PC-9 (cell line): ENCODE measurements at regions of chr16 and their contacts with region 1.

Region 1: GRCh38 chr16:31142109-31143010 is 6.8 kb upstream of the PRSS8 start:
- DNase-seq: peak; percentile 95 to 100
- H3K4me3 ChIP-seq: peak overlapping the region; percentile 52
- H3K27ac ChIP-seq: peak overlapping the region; percentile 69
- H3K4me1 ChIP-seq: peaks cover 39% of the 10 kb centered on the region
- H3K27me3 ChIP-seq: no peaks in the 10 kb centered on the region
- CTCF ChIP-seq: peak; percentile 93

Region 2: DNA sequence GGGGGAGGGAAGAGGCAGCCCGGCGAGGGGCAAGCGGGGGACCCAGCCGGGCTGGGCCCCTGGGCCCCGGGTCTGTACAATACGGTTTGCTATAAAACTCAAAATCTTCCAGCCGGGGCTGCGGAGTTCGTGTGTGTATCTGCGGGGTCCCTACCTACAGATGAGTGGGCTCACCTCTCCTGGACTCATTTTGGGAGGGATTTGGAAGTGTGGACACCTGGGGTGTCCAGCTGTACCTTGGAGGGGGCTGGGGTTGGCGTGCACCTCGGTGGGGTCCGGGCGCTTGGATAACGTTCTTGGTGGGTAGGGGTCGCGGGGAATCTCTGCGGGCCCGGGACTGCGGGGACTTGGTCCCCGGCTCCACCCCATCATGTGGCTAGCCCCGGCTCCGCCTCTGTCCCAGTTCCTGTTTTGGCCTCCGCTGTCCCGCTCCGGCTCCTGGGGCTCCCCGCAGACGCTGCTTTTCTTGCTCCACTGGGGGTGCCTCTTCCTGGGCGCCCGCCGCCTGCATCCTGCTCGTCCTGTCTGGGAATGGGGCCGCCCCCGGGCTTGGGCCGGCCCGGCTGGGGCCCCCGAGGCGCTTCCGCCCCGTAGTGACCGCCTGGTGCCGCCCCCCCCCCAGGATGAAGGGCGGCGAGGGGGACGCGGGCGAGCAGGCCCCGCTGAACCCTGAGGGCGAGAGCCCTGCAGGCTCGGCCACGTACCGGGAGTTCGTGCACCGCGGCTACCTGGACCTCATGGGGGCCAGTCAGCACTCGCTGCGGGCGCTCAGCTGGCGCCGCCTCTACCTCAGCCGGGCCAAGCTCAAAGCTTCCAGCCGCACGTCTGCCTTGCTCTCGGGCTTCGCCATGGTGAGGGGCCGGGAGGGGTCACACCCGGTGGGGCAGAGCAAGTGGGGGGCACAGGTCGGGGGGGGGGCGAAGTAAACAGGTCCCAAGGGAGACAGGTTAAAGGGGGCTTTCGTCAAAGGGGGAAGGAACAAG is 193.4 kb before region 1 on chr16 and contains the start of gene ORAI3:
- CTCF ChIA-PET with region 1: interaction called, 3 read pairs
- POLR2A ChIA-PET with region 1: interaction called, 12 read pairs
- intact Hi-C with region 1: no loop called
- DNase-seq: peak; percentile 53 to 73
- H3K4me3 ChIP-seq: peak within 1 kb of the TSS; percentile 90
- H3K27ac ChIP-seq: no peak within 1 kb of the TSS
- H3K4me1 ChIP-seq: peaks cover 15% of the 10 kb centered on the region
- H3K27me3 ChIP-seq: no peaks in the 10 kb centered on the region
- CTCF ChIP-seq: no peak
- total RNA-seq, gene ORAI3: 40.7 and 43.5 TPM in 2 replicates

Region 3: DNA sequence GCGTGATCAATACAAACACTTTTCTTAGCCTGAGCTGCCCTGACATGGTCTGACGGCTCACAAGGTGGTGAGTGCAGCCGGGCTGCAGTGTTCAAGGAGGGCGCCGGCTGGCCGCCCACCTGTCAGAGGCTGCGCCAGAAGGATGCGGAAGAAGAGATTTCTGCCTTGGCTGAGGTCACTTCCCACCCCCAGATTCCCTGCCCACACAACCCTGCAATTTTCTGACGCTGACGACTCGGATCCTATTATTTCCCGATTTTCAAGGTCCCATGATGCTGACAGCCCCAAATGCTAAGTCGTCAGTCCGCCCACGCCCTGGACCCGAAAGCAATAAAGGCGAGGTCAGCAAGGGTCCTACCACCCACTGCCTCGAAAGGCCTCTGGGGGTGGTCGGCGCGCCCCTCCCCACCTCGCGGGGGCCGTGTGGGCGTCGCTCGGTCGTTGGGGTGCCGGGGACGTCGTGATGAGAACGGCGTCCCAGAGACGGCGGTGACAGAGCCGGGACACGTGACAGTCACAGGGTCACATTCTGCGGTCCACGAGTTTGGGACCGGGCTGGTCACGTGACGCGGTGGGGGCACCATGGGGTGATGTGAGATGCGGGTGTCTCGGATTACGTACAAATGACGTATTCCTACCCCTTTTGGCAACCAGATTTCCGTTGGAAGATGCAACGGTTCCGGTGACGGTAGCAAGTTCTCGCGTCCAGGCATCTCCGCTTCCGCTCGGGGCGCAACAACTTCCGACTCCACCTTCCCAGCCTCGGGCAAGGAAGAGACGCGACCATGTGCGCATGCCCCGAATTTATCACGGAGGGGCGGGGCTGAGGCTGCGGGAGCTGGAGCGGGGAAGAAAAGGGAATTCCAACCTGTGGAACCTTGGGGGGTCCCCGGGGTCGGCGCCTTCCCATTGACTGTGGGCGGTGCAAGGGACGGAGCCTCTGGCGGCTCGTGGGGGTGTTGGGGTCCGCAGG is 109.3 kb before region 1 on chr16 and contains the start of gene STX4:
- CTCF ChIA-PET with region 1: interaction called, 4 read pairs
- POLR2A ChIA-PET with region 1: no interaction called
- intact Hi-C with region 1: loop called (anchors 1 kb)
- DNase-seq: peak; percentile 93 to 99
- H3K4me3 ChIP-seq: peak within 1 kb of the TSS; percentile 87
- H3K27ac ChIP-seq: peak within 1 kb of the TSS; percentile 62
- H3K4me1 ChIP-seq: peaks cover 12% of the 10 kb centered on the region
- H3K27me3 ChIP-seq: no peaks in the 10 kb centered on the region
- CTCF ChIP-seq: no peak
- total RNA-seq, gene STX4: 85.8 and 100 TPM in 2 replicates

Region 4: DNA sequence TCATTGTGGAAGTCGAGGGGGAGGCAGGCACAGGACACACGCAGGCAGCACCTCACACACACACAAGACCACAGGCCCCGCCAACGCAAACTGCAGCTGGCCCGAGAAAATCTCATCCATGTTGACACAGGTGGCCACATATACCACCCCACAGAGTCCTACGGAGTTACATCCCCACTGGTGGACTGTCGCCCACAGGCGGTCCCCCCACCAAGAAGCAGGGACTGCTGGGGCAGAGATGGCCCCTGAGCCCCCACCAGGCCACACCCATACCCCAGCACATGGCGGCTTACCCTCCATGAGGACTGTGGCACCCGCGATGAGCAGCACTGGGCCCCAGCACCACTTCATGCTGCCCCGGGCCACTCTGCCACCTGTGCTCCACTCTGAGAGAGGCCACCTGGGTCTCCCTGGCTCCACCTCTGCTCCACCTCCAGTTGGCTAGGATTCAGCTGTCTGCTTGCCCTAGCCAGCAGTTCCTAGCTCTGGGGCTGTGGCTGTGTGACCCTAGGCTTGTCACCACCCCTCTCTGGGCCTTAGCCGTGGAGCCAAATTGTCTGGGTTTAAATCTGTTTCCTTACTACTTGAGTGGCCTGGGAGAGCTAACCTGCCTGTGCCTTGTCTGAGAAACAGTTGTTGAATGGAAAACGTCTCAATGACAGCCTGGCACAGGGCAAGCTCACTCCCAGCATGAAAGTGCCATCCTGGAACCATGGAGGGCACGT is 53.7 kb before region 1 on chr16 and contains the start of gene PRSS53:
- CTCF ChIA-PET with region 1: no interaction called
- POLR2A ChIA-PET with region 1: no interaction called
- intact Hi-C with region 1: no loop called
- DNase-seq: no peak
- H3K4me3 ChIP-seq: no peak within 1 kb of the TSS
- H3K27ac ChIP-seq: no peak within 1 kb of the TSS
- H3K4me1 ChIP-seq: 0 out of 2 replicates have a peak, but pooled peaks cover 3% of the 10 kb centered on the region
- H3K27me3 ChIP-seq: no peaks in the 10 kb centered on the region
- CTCF ChIP-seq: no peak
- total RNA-seq, gene PRSS53: 7.7 and 9.2 TPM in 2 replicates

Region 5: DNA sequence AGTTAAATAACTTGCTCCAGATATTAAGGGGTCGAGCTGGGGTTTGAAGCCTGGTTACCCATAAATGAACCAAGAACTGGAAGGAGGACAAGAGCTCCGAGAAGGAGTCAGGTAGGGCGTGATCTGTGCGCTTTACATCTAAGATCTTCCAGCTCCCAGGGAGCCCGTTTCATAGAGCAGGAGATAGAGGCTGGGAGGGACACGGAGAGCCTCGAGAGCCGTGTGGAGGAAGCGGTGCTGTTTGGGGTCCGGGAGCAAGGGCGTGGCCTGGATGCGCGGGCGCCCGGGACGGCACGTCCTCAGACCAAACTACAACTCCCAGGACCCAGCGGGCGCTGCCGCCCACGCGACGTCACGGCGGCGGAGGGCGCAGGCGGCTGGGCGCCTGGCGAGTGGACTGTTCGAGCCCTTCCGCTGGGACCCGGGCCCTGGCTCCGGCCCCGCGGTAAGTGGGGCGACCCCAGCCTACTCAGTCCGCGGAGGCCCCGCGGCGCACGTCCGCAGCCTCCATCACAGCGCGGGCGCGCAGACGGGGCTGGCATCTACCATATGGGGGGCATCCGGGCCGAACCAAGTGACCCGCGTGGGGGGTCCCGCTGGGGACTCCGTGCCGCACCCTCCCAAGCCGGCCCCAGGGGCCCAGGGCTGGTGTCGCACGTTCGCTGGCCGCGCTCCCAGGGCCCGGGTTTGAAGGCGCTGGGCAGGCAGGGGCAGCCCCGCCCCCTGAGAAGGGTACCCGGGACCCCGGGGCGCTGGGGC is 34.1 kb before region 1 on chr16 and contains the start of gene BCKDK:
- CTCF ChIA-PET with region 1: no interaction called
- POLR2A ChIA-PET with region 1: interaction called, 4 read pairs
- intact Hi-C with region 1: loop called (anchors 5 kb)
- DNase-seq: peak in 1 of 2 experiments; percentile 68
- H3K4me3 ChIP-seq: peak within 1 kb of the TSS; percentile 99
- H3K27ac ChIP-seq: peak within 1 kb of the TSS; percentile 20; the same call in 1 of the 2 replicates
- H3K4me1 ChIP-seq: peaks cover 15% of the 10 kb centered on the region
- H3K27me3 ChIP-seq: no peaks in the 10 kb centered on the region
- CTCF ChIP-seq: no peak
- total RNA-seq, gene BCKDK: 41.5 and 66.5 TPM in 2 replicates

Region 6: GRCh38 chr16:31179747-31180459 is 37.5 kb after region 1 on chr16 and contains the start of gene FUS:
- CTCF ChIA-PET with region 1: interaction called, 10 read pairs
- POLR2A ChIA-PET with region 1: interaction called, 8 read pairs
- intact Hi-C with region 1: loop called (anchors 1 kb)
- DNase-seq: peak; percentile 80 to 93
- H3K4me3 ChIP-seq: peak within 1 kb of the TSS; percentile 83
- H3K27ac ChIP-seq: peak within 1 kb of the TSS; percentile 94
- H3K4me1 ChIP-seq: peaks cover 22% of the 10 kb centered on the region
- H3K27me3 ChIP-seq: no peaks in the 10 kb centered on the region
- CTCF ChIP-seq: no peak
- total RNA-seq, gene FUS: 429 and 637 TPM in 2 replicates

Region 7: GRCh38 chr16:31371619-31372484 is 229.5 kb after region 1 on chr16:
- CTCF ChIA-PET with region 1: interaction called, 13 read pairs
- POLR2A ChIA-PET with region 1: no interaction called
- intact Hi-C with region 1: no loop called
- DNase-seq: no peak
- H3K4me3 ChIP-seq: no peak overlapping the region
- H3K27ac ChIP-seq: no peak overlapping the region
- H3K4me1 ChIP-seq: no peaks in the 10 kb centered on the region
- H3K27me3 ChIP-seq: peaks cover 45% of the 10 kb centered on the region
- CTCF ChIP-seq: no peak

Region 8: DNA sequence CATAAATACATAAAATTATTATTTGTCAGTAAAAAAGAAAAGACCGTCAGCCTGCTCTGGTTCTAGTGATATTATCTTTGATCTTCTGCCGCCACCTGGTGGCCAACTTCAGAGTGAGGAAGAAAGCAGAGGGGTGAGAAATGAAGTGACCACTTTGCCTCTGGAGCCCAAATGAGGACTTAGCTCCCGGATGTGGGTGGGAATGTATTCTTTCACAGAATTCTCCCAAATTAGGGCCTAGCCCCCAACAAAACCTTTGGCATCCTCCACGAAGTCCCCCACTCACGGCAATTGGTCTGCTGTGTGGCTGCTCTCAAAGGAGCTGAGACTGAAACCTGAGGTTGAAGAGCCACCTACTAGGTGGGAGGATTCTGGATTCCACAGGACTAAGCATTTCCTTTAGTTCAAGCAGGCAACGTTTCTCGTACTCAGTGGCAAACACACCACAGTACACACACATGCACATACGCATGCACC is 726.4 kb after region 1 on chr16:
- CTCF ChIA-PET with region 1: no interaction called
- POLR2A ChIA-PET with region 1: interaction called, 3 read pairs
- intact Hi-C with region 1: loop called (anchors 2 kb)
- DNase-seq: peak; percentile 54 to 78
- H3K4me3 ChIP-seq: no peak overlapping the region
- H3K27ac ChIP-seq: no peak overlapping the region
- H3K4me1 ChIP-seq: no peaks in the 10 kb centered on the region
- H3K27me3 ChIP-seq: peaks cover 13% of the 10 kb centered on the region
- CTCF ChIP-seq: peak; percentile 94